Heart left ventricle (tissue), 16 donors: ENCODE measurements at regions of chr15 and their contacts with region 1.

Region 1: DNA sequence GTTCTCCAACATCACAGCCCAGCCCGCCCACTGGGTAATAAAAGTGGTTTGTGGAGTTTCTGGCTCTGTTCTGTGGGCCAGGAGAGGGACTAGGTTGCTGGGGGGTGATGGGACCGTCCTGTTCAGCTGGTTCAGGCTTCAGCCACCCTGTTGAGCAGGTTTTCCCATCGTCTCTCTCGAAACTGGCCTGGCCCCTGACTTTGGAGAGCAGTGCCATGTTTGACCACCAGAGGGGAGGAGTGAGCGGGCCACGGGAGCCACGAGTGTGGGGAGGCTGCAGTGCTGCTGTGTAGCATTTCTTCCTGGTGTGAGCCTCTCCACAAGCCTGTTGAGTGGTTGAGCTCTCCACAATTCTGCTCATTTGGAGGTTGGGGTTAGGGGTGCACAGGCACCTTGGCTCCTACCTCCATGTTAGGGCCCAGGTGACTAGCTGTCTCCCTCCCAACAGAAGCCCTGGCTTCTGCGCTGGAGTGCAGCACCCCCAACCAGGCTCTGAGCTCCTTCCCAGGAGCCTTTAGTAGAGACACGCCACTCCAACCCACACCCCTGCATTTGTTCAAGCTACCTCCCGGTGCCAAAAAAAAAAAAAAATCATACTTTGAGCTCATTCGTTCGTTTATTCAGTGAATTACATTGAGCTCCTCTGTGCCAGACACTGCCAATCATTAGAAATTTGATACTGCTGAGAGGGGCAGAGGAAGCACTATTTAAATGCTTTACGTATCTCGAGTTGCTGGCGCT is 13.9 kb downstream of the SPINT1 start:
- DNase-seq: peak; percentile 53 to 87 (median 63)
- ATAC-seq: peak; percentile 60 to 90 (median 82)
- H3K4me3 ChIP-seq: no peak overlapping the region
- H3K27ac ChIP-seq: no peak overlapping the region
- H3K4me1 ChIP-seq: peaks cover 0 to 11% (median 0%) of the 10 kb centered on the region in 12 donors
- H3K27me3 ChIP-seq: peaks cover 0 to 20% (median 0%) of the 10 kb centered on the region in 9 donors
- CTCF ChIP-seq: peak; percentile 89 to 95 (median 92)
- POLR2A ChIP-seq: no peak

Region 2: GRCh38 chr15:40684381-40684780 is 173.4 kb before region 1 on chr15:
- intact Hi-C with region 1: loop called in 1 of 10 experiments (anchors 10 kb)
- DNase-seq: no peak
- ATAC-seq: no peak
- H3K4me3 ChIP-seq: no peak overlapping the region
- H3K27ac ChIP-seq: no peak overlapping the region
- H3K4me1 ChIP-seq: no peaks in the 10 kb centered on the region
- H3K27me3 ChIP-seq: no peaks in the 10 kb centered on the region
- CTCF ChIP-seq: no peak
- POLR2A ChIP-seq: no peak

Region 3: GRCh38 chr15:41180206-41180789 is 322.5 kb after region 1 on chr15:
- intact Hi-C with region 1: loop called in 7 of 10 experiments (anchors 2 to 10 kb)
- DNase-seq: no peak
- ATAC-seq: no peak
- H3K4me3 ChIP-seq: no peak overlapping the region
- H3K27ac ChIP-seq: no peak overlapping the region
- H3K4me1 ChIP-seq: no peaks in the 10 kb centered on the region
- H3K27me3 ChIP-seq: peaks cover 0 to 5% (median 0%) of the 10 kb centered on the region in 9 donors
- CTCF ChIP-seq: no peak
- POLR2A ChIP-seq: no peak